ENCODE measurements at regions of chr9 and their contacts with region 1.

Region 1: GRCh38 chr9:37209431-37210386 is 89.3 kb downstream of the ZCCHC7 start:
- DNase-seq: no peak
- ATAC-seq: no peak
- H3K4me3 ChIP-seq: no peak overlapping the region
- H3K27ac ChIP-seq: no peak overlapping the region
- H3K4me1 ChIP-seq: no peaks in the 10 kb centered on the region
- H3K27me3 ChIP-seq: no peaks in the 10 kb centered on the region
- CTCF ChIP-seq: no peak

Region 2: DNA sequence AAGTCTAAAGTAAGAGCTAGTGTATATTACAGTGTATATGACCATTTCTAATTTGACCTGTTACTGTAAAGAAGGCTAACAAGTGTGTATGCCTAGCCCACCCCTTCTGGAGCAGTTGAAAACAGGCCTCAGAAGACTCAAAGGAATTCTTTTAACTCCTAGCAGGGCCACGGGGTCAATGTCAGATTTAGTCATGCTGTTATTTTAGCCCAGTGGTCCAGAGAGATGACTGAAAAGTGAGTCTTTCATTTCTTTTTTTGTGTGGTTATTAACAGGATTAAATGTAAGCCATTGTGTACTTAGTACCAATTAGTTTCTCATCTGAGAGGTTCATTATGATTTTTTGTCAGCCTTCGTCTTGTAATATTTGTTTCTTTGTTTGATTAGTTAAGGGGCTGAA is 64.9 kb before region 1 on chr9:
- intact Hi-C with region 1: loop called in 1 of 2 experiments (anchors 10 kb)
- DNase-seq: no peak
- ATAC-seq: no peak
- H3K4me3 ChIP-seq: no peak overlapping the region
- H3K27ac ChIP-seq: no peak overlapping the region
- H3K4me1 ChIP-seq: no peaks in the 10 kb centered on the region
- H3K27me3 ChIP-seq: no peaks in the 10 kb centered on the region
- CTCF ChIP-seq: no peak

Region 3: GRCh38 chr9:37156781-37157356 is 52.8 kb before region 1 on chr9:
- intact Hi-C with region 1: no loop called
- DNase-seq: no peak
- ATAC-seq: no peak
- H3K4me3 ChIP-seq: no peak overlapping the region
- H3K27ac ChIP-seq: no peak overlapping the region
- H3K4me1 ChIP-seq: no peaks in the 10 kb centered on the region
- H3K27me3 ChIP-seq: no peaks in the 10 kb centered on the region
- CTCF ChIP-seq: no peak

Region 4: GRCh38 chr9:37251452-37251851 is 41.7 kb after region 1 on chr9:
- intact Hi-C with region 1: loop called in 1 of 2 experiments (anchors 10 kb)
- DNase-seq: no peak
- ATAC-seq: no peak
- H3K4me3 ChIP-seq: no peak overlapping the region
- H3K27ac ChIP-seq: no peak overlapping the region
- H3K4me1 ChIP-seq: no peaks in the 10 kb centered on the region
- H3K27me3 ChIP-seq: no peaks in the 10 kb centered on the region
- CTCF ChIP-seq: no peak

Region 5: GRCh38 chr9:37309136-37309535 is 99.4 kb after region 1 on chr9:
- intact Hi-C with region 1: loop called in 1 of 2 experiments (anchors 10 kb)
- DNase-seq: no peak
- ATAC-seq: no peak
- H3K4me3 ChIP-seq: no peak overlapping the region
- H3K27ac ChIP-seq: no peak overlapping the region
- H3K4me1 ChIP-seq: no peaks in the 10 kb centered on the region
- H3K27me3 ChIP-seq: no peaks in the 10 kb centered on the region
- CTCF ChIP-seq: peak; percentile 11

Measured in psoas muscle (tissue), 8 donors.